ENCODE measurements at regions of chr12 and their contacts with region 1.

Region 1: GRCh38 chr12:53508534-53509199 is 1.4 kb upstream of the NPFF start:
- DNase-seq: peak; percentile 89
- H3K4me3 ChIP-seq: no peak overlapping the region
- H3K27ac ChIP-seq: no peak overlapping the region
- H3K4me1 ChIP-seq: peaks cover 3% of the 10 kb centered on the region
- H3K27me3 ChIP-seq: no peaks in the 10 kb centered on the region
- CTCF ChIP-seq: peak; percentile 90 to 94
- POLR2A ChIP-seq: no peak

Region 2: GRCh38 chr12:53465679-53466078 is 43.0 kb before region 1 on chr12:
- CTCF ChIA-PET with region 1: interaction called, 5 read pairs
- POLR2A ChIA-PET with region 1: interaction called, 12 read pairs
- dilution Hi-C with region 1: no loop called
- intact Hi-C with region 1: no loop called
- DNase-seq: no peak
- H3K4me3 ChIP-seq: no peak overlapping the region
- H3K27ac ChIP-seq: no peak overlapping the region
- H3K4me1 ChIP-seq: no peaks in the 10 kb centered on the region
- H3K27me3 ChIP-seq: no peaks in the 10 kb centered on the region
- CTCF ChIP-seq: peak in 1 of 2 donors; percentile 1
- POLR2A ChIP-seq: no peak

Region 3: DNA sequence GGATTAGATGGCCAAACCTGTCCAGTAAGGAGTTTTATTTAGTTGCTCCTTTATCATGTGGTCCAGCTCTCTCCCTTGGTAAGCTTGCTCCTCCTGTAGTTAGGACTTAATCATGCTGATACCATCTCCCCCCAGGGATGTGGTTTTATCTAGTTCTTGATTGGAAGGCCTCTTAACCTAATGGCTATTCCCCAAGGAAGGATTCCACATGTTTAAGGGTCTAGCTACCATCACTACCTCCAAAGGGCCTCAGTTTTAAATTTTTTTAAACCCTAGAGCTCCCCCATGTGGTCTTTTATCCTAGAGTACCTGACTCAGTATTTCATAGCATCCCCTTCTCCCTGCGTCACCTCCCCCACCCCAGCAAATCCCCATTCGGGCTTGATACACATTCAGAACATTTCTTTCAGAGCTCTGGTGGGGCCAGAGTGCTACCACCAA is 31.9 kb before region 1 on chr12:
- CTCF ChIA-PET with region 1: interaction called, 48 read pairs
- POLR2A ChIA-PET with region 1: interaction called, 3 read pairs
- dilution Hi-C with region 1: no loop called
- intact Hi-C with region 1: no loop called
- DNase-seq: peak; percentile 36
- H3K4me3 ChIP-seq: no peak overlapping the region
- H3K27ac ChIP-seq: no peak overlapping the region
- H3K4me1 ChIP-seq: no peaks in the 10 kb centered on the region
- H3K27me3 ChIP-seq: no peaks in the 10 kb centered on the region
- CTCF ChIP-seq: peak; percentile 18 to 29
- POLR2A ChIP-seq: no peak

Region 4: GRCh38 chr12:53481957-53482586 is 26.6 kb before region 1 on chr12:
- CTCF ChIA-PET with region 1: interaction called, 48 read pairs
- POLR2A ChIA-PET with region 1: interaction called, 3 read pairs
- dilution Hi-C with region 1: no loop called
- intact Hi-C with region 1: loop called (anchors 2 kb)
- DNase-seq: no peak
- H3K4me3 ChIP-seq: no peak overlapping the region
- H3K27ac ChIP-seq: no peak overlapping the region
- H3K4me1 ChIP-seq: no peaks in the 10 kb centered on the region
- H3K27me3 ChIP-seq: no peaks in the 10 kb centered on the region
- CTCF ChIP-seq: peak; percentile 10 to 18
- POLR2A ChIP-seq: no peak

Region 5: GRCh38 chr12:53984901-53985709 is 476.4 kb after region 1 on chr12 and contains the start of gene HOXC10:
- CTCF ChIA-PET with region 1: no interaction called
- POLR2A ChIA-PET with region 1: no interaction called
- dilution Hi-C with region 1: no loop called
- intact Hi-C with region 1: no loop called
- DNase-seq: peak; percentile 71
- H3K4me3 ChIP-seq: no peak within 1 kb of the TSS
- H3K27ac ChIP-seq: no peak within 1 kb of the TSS
- H3K4me1 ChIP-seq: no peaks in the 10 kb centered on the region
- H3K27me3 ChIP-seq: peaks cover 89 to 93% of the 10 kb centered on the region in 2 experiments
- CTCF ChIP-seq: peak; percentile 47 to 72
- POLR2A ChIP-seq: no peak
- total RNA-seq, gene HOXC10: 0.44 TPM in 1 of 2 replicates, not detected in the other

Measured in endothelial cell of umbilical vein (primary cell).